Lower leg skin (tissue), 4 donors: ENCODE measurements at regions of chr2 and their contacts with region 1.

Region 1: GRCh38 chr2:12716282-12717190 is at the start of gene TRIB2:
- DNase-seq: peak; percentile 69 to 95
- H3K4me3 ChIP-seq: peak within 1 kb of the TSS; percentile 82
- CTCF ChIP-seq: no peak
- POLR2A ChIP-seq: no peak
- total RNA-seq, gene TRIB2: 26.1 to 52.5 (median 29.1) TPM

Region 2: GRCh38 chr2:11863513-11864328 is 852.8 kb before region 1 on chr2:
- intact Hi-C with region 1: loop called (anchors 5 kb)
- DNase-seq: peak; percentile 79 to 95
- H3K4me3 ChIP-seq: no peak overlapping the region
- CTCF ChIP-seq: peak in 1 of 3 donors; percentile 92
- POLR2A ChIP-seq: no peak

Region 3: DNA sequence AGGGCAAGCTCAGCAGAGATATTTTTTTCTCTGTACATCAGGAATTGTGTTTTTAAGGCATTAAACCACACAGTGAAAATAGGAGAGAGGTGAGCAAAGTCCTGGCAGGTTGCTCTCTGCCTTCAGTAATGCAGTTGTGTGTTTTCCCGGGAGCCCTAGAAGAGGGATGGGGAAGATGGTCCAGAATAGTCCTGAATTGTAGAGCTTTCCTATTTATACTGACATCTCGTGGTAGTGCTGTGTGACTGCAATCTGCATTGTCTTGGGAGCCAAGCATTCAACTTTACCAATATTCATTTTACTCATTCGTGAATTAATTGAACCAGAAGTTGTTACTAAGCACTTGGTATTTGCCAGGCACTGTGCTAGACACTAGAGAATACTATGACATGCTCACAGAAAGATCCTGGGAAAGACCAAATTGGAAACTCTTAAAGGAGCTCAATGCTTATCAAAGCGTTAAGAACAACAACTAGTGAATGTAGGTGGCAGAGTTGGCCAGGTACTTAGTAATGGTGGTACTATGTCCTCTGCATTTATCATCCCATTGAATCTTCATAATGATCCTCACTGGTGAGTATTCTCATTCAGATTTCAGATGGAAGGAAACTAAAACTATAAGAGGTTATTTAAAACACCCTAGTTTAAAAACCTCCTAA is 214.8 kb after region 1 on chr2:
- intact Hi-C with region 1: loop called (anchors 10 kb)
- DNase-seq: no peak
- H3K4me3 ChIP-seq: no peak overlapping the region
- CTCF ChIP-seq: no peak
- POLR2A ChIP-seq: no peak